Cardiac septum (tissue), 1 donor: ENCODE measurements at regions of chr1 and their contacts with region 1.

Region 1: GRCh38 chr1:221203224-221204054 is 324.2 kb downstream of the HLX start:
- DNase-seq: peak; percentile 89

Region 2: GRCh38 chr1:220810179-220810653 is 393.2 kb before region 1 on chr1:
- intact Hi-C with region 1: loop called (anchors 10 kb)
- DNase-seq: peak; percentile 92

Region 3: DNA sequence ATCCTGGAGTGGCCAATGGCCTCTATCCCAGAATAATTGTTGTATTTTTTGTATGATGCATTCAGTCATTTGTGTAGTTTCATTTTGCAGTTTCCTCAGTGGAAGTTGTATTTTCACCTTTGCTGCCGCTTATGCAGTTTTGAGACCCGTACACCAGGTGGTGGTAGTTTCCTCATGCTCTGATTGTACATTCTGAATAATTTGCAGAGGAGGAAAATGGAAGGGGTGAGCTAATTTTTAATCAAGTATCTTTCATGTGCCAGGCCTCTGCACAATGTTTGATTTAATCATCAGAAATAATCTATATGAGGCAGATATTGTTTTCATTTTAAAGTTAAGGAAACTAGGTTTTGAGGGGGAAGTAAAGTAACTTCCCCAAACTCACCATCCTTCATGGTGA is 294.7 kb before region 1 on chr1:
- intact Hi-C with region 1: loop called (anchors 2 kb)
- DNase-seq: no peak

Region 4: DNA sequence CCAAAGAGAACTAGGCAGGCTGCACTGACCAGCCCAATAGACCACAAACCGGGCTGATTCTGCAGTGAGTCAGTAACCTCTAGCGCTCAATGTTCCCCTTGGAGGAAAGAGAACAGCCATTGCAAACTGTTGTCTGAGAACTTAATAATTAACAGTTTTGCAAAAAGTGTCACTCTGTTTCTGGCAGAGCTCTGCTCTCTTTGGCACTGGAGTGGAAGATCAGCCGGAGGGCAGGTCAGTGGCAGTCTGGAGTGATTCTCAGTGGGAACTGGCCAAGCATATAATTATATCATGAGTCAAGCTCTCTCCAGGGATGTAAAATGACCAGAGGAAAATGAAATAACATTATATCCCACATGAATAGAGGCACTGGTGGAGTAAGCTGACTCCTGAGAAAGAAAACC is 85.9 kb before region 1 on chr1:
- intact Hi-C with region 1: loop called (anchors 5 kb)
- DNase-seq: no peak